ENCODE measurements at regions of chr1 and their contacts with region 1.

Region 1: DNA sequence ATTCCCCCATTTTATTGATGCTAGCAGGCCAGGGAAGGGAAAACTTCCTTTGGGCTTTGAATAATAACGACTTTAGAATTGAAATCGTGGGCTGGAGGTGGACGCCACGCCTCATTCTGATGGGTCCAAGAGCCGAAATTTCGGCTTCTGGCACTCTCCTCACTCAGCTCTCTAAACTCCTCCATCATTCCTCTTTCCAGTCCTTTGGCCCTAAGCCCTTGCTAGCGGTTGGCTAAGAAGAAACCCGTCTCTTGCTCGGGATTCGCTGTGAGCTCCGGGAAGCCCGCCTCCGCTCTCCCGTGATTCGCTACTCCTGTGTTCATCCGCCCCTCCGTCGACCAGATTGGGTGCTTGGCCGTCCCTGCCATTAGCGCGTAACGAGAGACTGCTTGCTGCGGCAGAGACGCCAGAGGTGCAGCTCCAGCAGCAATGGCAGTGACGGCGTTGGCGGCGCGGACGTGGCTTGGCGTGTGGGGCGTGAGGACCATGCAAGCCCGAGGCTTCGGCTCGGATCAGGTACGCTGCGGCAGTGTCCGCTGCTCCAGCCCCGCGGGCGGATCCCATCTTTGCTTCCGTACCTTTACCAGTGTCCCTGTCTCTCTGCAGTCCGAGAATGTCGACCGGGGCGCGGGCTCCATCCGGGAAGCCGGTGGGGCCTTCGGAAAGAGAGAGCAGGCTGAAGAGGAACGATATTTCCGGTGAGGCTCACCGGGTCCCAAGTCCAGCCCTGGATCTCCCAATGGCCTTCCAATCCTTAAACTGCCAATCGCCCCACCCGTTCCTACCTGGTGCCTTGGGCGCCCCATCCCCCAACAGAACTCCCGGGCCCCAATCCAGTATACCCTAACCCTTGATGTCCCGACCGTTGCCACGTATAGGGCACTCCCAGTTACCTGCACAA is at the start of gene ATP5IF1:
- DNase-seq: peak; percentile 99 to 100 (median 99)
- ATAC-seq: peak; percentile 93
- H3K4me3 ChIP-seq: peak within 1 kb of the TSS; percentile 67
- H3K27ac ChIP-seq: peak within 1 kb of the TSS; percentile 71
- H3K4me1 ChIP-seq: peaks cover 19 to 29% of the 10 kb centered on the region in 2 experiments
- H3K27me3 ChIP-seq: no peaks in the 10 kb centered on the region
- CTCF ChIP-seq: no peak
- EP300 ChIP-seq: 0 out of 2 replicates have a peak, but pooled peaks have one; percentile 20
- POLR2A ChIP-seq: peak; percentile 98
- RAD21 ChIP-seq: no peak
- polyA plus RNA-seq, gene ATP5IF1: 292 to 545 TPM

Region 2: GRCh38 chr1:27872059-27872801 is 363.8 kb before region 1 on chr1 and contains the start of gene THEMIS2:
- CTCF ChIA-PET with region 1: no interaction called
- POLR2A ChIA-PET with region 1: no interaction called
- in situ Hi-C with region 1: no loop called
- intact Hi-C with region 1: loop called (anchors 2 kb)
- DNase-seq: peak; percentile 82 to 97 (median 96)
- ATAC-seq: peak; percentile 94
- H3K4me3 ChIP-seq: peak within 1 kb of the TSS; percentile 67
- H3K27ac ChIP-seq: peak within 1 kb of the TSS; percentile 28; the same call in 1 of the 3 replicates
- H3K4me1 ChIP-seq: peaks cover 25 to 48% of the 10 kb centered on the region in 2 experiments
- H3K27me3 ChIP-seq: no peaks in the 10 kb centered on the region
- CTCF ChIP-seq: no peak
- EP300 ChIP-seq: no peak
- POLR2A ChIP-seq: peak; percentile 54; the same call in 1 of the 2 replicates
- RAD21 ChIP-seq: no peak
- polyA plus RNA-seq, gene THEMIS2: 2.3 to 3.4 TPM

Region 3: GRCh38 chr1:28067523-28068090 is 168.4 kb before region 1 on chr1:
- CTCF ChIA-PET with region 1: no interaction called
- POLR2A ChIA-PET with region 1: no interaction called
- in situ Hi-C with region 1: no loop called
- intact Hi-C with region 1: no loop called
- DNase-seq: no peak
- ATAC-seq: no peak
- H3K4me3 ChIP-seq: no peak overlapping the region
- H3K27ac ChIP-seq: peak overlapping the region; percentile 73; the same call in 1 of the 3 replicates
- H3K4me1 ChIP-seq: peaks cover 10 to 21% of the 10 kb centered on the region in 2 experiments
- H3K27me3 ChIP-seq: no peaks in the 10 kb centered on the region
- CTCF ChIP-seq: no peak
- EP300 ChIP-seq: no peak
- POLR2A ChIP-seq: no peak
- RAD21 ChIP-seq: no peak

Region 4: GRCh38 chr1:28108001-28108400 is 128.0 kb before region 1 on chr1:
- CTCF ChIA-PET with region 1: no interaction called
- POLR2A ChIA-PET with region 1: no interaction called
- in situ Hi-C with region 1: no loop called
- intact Hi-C with region 1: no loop called
- DNase-seq: no peak
- ATAC-seq: no peak
- H3K4me3 ChIP-seq: no peak overlapping the region
- H3K27ac ChIP-seq: no peak overlapping the region
- H3K4me1 ChIP-seq: peaks cover 0 to 15% of the 10 kb centered on the region in 2 experiments; a peak in 3 of 5 replicates
- H3K27me3 ChIP-seq: no peaks in the 10 kb centered on the region
- CTCF ChIP-seq: no peak
- EP300 ChIP-seq: no peak
- POLR2A ChIP-seq: no peak
- RAD21 ChIP-seq: no peak

Region 5: DNA sequence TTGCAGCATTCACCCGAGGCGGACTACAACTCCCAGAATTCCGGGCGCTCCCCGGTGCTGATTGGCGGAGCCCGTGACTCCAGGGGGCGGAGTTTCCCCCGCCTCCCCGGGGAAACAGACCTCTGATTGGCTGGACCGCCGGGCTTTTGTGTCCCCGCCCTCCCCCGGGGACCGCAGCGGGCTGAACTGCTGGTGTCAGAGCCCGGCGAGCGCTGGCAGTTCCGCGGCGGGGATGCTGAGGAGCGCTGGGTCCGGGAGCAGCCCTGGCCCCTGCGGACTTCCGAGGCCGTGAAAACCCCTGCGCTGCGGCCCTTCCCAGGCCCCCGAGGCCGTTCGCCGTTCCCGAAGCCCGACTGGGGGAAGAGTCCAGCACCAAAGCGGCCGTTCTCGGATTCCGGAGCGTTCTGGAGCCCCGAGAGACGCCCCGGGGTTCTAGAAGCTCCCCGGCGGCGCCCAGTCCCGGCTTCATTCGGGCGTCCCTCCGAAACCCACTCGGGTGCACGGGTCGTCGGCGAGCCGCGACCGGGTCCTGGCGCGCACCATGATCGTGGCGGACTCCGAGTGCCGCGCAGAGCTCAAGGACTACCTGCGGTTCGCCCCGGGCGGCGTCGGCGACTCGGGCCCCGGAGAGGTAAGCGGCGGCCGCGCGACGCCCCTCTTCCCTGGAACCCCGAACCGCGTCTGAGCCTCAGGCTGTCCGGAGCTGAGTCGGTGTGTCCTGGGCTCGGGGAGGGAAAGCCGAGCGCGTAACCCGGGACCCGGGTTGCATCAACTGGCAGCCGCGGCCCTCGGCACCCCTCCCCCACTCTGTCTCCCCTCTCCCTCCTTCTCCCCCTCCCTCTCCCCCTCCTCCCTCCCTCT is 23.5 kb after region 1 on chr1 and contains the start of gene SESN2:
- CTCF ChIA-PET with region 1: no interaction called
- POLR2A ChIA-PET with region 1: interaction called, 35 read pairs
- in situ Hi-C with region 1: no loop called
- intact Hi-C with region 1: no loop called
- DNase-seq: peak; percentile 99 to 100 (median 100)
- ATAC-seq: peak; percentile 92
- H3K4me3 ChIP-seq: peak within 1 kb of the TSS; percentile 96
- H3K27ac ChIP-seq: peak within 1 kb of the TSS; percentile 90
- H3K4me1 ChIP-seq: peaks cover 52 to 64% of the 10 kb centered on the region in 2 experiments
- H3K27me3 ChIP-seq: no peaks in the 10 kb centered on the region
- CTCF ChIP-seq: no peak; a peak in 1 of 6 replicates
- EP300 ChIP-seq: no peak
- POLR2A ChIP-seq: peak; percentile 99
- RAD21 ChIP-seq: peak in 1 of 2 experiments; percentile 31; a peak in 1 of 4 replicates
- polyA plus RNA-seq, gene SESN2: 3.7 to 5.4 TPM

Measured in K562 (cell line).